ENCODE measurements at regions of chrX and their contacts with region 1.

Region 1: GRCh38 chrX:12974796-12975669 is at the start of gene TMSB4X:
- DNase-seq: peak; percentile 95
- total RNA-seq, gene TMSB4X: 921 TPM

Region 2: DNA sequence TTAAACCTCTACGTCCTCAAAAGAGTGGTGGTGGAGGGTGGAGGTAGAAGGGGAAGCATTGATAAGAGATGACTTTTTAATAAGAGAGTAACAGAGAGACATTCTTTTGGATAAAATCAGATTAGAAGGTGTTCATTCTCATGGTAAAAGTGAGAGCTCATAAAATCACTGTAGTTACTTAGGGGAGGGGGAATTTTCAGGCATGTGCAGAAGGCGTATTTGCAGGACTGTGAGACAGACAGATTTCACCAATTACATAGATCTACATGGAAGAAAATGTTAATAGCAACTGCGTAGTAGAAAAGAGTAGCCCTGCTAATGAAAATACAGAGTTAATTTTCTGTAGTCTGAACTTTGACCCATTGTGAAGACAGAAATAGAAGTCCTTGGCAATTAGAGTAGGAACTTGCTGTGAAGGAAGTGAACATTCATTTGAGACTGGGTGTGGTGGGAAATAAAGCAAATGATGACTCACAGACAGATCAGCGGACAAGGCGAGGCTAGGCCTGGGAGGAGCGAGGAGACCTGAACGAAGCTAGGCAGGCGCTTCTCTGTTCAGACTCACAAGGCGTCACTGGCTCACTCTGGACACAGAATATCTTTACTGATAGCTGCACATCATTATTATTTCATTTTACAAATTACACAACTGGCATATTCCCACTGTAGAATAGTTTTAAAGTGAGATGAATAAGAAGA is 126.6 kb after region 1 on chrX:
- intact Hi-C with region 1: loop called (anchors 5 kb)
- DNase-seq: no peak

Region 3: GRCh38 chrX:13167481-13168231 is 192.6 kb after region 1 on chrX:
- intact Hi-C with region 1: loop called (anchors 5 kb)
- DNase-seq: no peak

Region 4: GRCh38 chrX:13360146-13360545 is 385.1 kb after region 1 on chrX:
- intact Hi-C with region 1: loop called (anchors 10 kb)
- DNase-seq: no peak

Measured in cardiac septum (tissue), 1 donor.